Activated CD4-positive, alpha-beta T cell treated with anti-CD3 and anti-CD28 coated beads for 36 hours (primary cell): ENCODE measurements at regions of chr20 and their contacts with region 1.

Region 1: DNA sequence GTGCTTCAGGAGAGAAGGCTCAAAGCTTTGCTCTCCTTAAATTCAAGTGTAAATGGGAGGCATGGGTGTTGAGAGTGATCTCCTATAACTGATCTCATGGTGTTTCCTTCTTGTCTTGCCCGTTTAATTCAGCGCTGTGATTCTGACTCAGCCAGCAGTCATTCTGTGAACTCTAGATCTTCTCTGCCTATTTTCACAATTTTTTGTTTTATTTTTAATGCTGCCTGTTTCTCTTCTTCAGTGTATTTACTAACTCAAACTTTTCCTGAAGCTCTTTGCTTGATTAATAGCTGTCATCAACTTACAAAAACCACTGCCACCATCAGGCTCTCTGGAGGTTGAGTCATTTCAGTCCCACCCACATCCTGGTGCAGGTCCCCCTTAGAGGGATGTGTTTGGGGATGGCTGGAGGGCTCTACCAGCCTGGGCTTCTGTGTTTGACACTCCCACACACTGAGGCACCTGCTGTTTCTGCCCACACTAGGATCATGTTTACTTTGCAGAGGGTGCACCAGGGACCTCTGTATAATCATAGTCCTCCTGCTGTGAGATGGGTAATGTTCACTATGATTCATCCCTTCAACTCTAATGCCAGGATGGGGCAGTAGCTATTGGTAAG is 94.0 kb downstream of the SHLD1 start:
- DNase-seq: peak; percentile 83
- ATAC-seq: peak; percentile 92
- H3K4me3 Mint-ChIP-seq: peak overlapping the region; percentile 30
- H3K27ac Mint-ChIP-seq: peak overlapping the region; percentile 85
- H3K4me1 Mint-ChIP-seq: peaks cover 62% of the 10 kb centered on the region
- H3K27me3 Mint-ChIP-seq: no peaks in the 10 kb centered on the region

Region 2: GRCh38 chr20:5353624-5354496 is 490.3 kb before region 1 on chr20:
- CTCF ChIA-PET with region 1: no interaction called
- POLR2A ChIA-PET with region 1: no interaction called
- intact Hi-C with region 1: loop called in 1 of 2 experiments (anchors 10 kb)
- DNase-seq: no peak
- ATAC-seq: peak; percentile 88
- H3K4me3 Mint-ChIP-seq: no peak overlapping the region
- H3K27ac Mint-ChIP-seq: peak overlapping the region; percentile 52
- H3K4me1 Mint-ChIP-seq: peaks cover 27% of the 10 kb centered on the region
- H3K27me3 Mint-ChIP-seq: peaks cover 17% of the 10 kb centered on the region

Region 3: GRCh38 chr20:5590899-5591298 is 253.3 kb before region 1 on chr20:
- CTCF ChIA-PET with region 1: no interaction called
- POLR2A ChIA-PET with region 1: no interaction called
- intact Hi-C with region 1: loop called in 1 of 2 experiments (anchors 1 kb)
- DNase-seq: no peak
- ATAC-seq: peak; percentile 37
- H3K4me3 Mint-ChIP-seq: peak overlapping the region; percentile 23
- H3K27ac Mint-ChIP-seq: peak overlapping the region; percentile 79
- H3K4me1 Mint-ChIP-seq: peaks cover 78% of the 10 kb centered on the region
- H3K27me3 Mint-ChIP-seq: no peaks in the 10 kb centered on the region

Region 4: GRCh38 chr20:5918856-5919625 is 74.9 kb after region 1 on chr20:
- CTCF ChIA-PET with region 1: no interaction called
- POLR2A ChIA-PET with region 1: no interaction called
- intact Hi-C with region 1: loop called (anchors 1 to 2 kb)
- DNase-seq: peak; percentile 12
- ATAC-seq: peak; percentile 89
- H3K4me3 Mint-ChIP-seq: no peak overlapping the region
- H3K27ac Mint-ChIP-seq: peak overlapping the region; percentile 4
- H3K4me1 Mint-ChIP-seq: peaks cover 19% of the 10 kb centered on the region
- H3K27me3 Mint-ChIP-seq: peaks cover 8% of the 10 kb centered on the region

Region 5: DNA sequence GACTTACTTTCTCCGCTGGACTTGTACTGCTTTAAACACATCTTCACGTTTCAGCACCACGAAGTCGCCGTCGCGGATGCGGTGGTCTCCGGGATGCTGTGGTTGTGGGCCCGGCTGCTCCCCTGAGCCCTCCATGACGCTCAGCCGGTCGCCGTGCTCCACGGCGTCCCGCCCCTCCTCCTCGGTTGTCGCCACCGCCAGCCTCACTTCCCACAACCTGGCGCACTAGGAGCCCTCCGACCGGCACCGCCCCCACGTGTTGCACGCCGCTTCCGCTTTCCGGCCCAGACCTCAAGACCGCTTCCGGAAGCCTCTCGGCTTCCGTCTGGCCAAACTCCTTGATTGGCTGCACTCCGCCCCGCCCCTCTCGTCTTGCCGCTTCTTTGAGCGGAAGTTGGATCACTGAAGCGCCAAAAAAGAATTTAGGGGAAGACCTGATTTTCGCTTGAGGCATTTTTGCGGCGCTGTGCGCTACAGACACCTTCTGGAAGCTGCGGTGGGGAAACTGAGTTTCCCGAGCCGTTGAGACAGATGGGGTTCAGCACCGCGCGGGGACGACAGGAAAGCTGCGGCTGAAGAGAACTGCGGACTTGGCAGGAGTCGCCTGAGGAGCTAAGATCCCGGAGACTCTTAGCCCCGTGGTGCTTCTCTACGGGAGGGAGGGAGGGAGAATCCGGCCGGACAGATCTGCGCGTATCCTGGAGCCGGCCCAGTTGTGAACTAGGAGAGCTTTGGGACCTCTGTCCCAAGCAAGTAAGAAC is 106.3 kb after region 1 on chr20 and contains the starts of genes MCM8 and TRMT6:
- CTCF ChIA-PET with region 1: no interaction called
- POLR2A ChIA-PET with region 1: no interaction called
- intact Hi-C with region 1: loop called (anchors 1 kb)
- DNase-seq: peak; percentile 98
- ATAC-seq: peak; percentile 87
- H3K4me3 Mint-ChIP-seq: peak within 1 kb of the TSS; percentile 95
- H3K27ac Mint-ChIP-seq: peak within 1 kb of the TSS; percentile 96
- H3K4me1 Mint-ChIP-seq: peaks cover 49% of the 10 kb centered on the region
- H3K27me3 Mint-ChIP-seq: no peaks in the 10 kb centered on the region
- total RNA-seq, gene MCM8: 42.5 to 45.4 TPM
- total RNA-seq, gene TRMT6: 20.9 to 27.3 TPM

Region 6: GRCh38 chr20:6034134-6034969 is 190.2 kb after region 1 on chr20:
- CTCF ChIA-PET with region 1: no interaction called
- POLR2A ChIA-PET with region 1: no interaction called
- intact Hi-C with region 1: no loop called
- DNase-seq: no peak
- ATAC-seq: no peak
- H3K4me3 Mint-ChIP-seq: no peak overlapping the region
- H3K27ac Mint-ChIP-seq: peak overlapping the region; percentile 52
- H3K4me1 Mint-ChIP-seq: peaks cover 23% of the 10 kb centered on the region
- H3K27me3 Mint-ChIP-seq: no peaks in the 10 kb centered on the region